GM10248 (cell line): ENCODE measurements at regions of chr20 and their contacts with region 1.

Region 1: GRCh38 chr20:38893565-38894090 is 32.6 kb upstream of the FAM83D start:
- DNase-seq: peak; percentile 89
- CTCF ChIP-seq: peak; percentile 99

Region 2: DNA sequence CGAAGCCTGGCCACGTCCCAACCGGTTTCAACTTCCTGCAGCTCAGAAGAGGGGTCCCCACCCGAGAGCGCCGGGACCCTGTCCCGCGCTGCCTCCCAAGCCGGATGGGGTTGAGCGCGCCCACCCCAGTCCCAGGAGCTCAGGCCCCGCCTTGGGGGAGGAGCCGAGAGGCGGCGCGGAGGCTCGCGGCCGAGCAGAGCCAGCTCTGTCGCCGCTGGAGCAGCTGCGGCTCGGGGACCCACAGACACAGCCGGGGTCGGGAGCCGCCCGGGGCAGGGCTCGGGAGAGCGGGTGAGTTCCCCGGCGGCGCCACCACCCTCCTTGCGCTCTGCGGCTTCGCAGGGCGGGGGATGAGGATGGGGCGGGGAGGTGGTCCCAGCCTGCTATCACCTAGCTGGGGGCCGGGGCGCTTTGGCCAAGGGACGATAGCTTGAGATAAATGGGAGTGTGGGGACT is 88.1 kb before region 1 on chr20 and contains the start of gene PPP1R16B:
- CTCF ChIA-PET with region 1: interaction called, 26 read pairs
- POLR2A ChIA-PET with region 1: interaction called, 6 read pairs
- DNase-seq: peak; percentile 87
- CTCF ChIP-seq: no peak

Region 3: GRCh38 chr20:38833857-38834164 is 59.8 kb before region 1 on chr20:
- CTCF ChIA-PET with region 1: interaction called, 10 read pairs
- POLR2A ChIA-PET with region 1: no interaction called
- DNase-seq: peak; percentile 36
- CTCF ChIP-seq: no peak

Region 4: DNA sequence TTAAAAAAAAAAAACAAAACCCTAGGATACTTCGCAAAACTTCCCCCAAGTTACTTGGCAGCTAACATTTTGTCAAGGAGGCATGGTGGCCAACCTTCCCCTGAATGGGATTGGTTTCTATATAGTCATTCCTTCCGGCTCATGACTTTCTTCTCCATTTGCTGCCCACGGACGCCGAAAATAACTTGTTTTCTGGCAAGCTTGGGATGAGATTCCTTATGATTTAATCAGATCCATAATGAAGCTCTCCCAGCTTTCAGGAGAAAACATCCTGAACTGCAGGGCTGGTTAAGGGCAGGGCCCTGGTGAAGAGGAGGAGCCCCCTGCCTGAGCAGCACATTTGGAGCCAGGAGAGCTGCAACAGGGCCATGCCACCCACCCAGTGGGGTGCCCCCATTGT is 38.3 kb before region 1 on chr20:
- CTCF ChIA-PET with region 1: interaction called, 66 read pairs
- POLR2A ChIA-PET with region 1: no interaction called
- DNase-seq: no peak
- CTCF ChIP-seq: no peak

Region 5: DNA sequence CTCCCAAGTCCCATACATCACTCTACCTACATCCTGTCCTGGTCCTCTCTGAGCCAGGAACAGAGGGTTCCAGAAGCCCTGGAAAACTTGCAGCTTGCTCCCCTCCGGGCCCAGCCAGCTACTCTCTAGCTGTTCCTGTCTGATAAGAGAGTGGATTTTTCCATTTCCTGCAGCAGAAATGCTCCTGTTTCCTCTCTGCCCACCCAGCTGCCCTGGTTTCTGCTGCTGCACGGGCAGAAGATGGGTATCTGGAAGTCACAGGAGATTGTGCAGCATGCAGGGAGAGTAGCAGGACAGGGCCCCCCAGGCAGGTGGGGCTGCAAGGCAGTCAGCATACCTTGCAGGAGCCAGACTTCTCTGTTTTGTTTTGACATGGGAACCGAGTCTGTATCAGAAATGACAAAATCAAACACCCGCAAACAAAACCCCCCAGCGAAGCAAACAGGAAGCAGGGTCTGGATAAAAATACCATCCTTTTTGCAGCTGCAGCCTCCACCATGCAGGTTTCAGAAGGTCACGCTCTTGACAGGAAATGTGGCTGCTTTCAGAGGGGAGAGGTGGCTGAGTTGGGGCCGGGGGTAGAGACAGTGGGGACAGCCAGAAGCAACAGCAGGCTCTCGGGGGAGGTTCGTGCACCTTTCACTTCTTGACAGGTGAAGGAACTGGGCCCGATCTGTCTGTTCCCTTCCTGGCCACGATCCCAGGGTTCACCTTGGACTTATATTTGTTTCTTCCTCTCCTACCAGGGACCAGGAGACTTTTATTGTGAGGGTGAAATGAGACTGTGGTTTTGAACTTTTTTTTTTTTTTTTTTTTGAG is 18.2 kb before region 1 on chr20:
- CTCF ChIA-PET with region 1: interaction called, 112 read pairs
- POLR2A ChIA-PET with region 1: interaction called, 6 read pairs
- DNase-seq: peak; percentile 83
- CTCF ChIP-seq: no peak

Region 6: GRCh38 chr20:38907918-38908677 is 14.5 kb after region 1 on chr20:
- CTCF ChIA-PET with region 1: interaction called, 19 read pairs
- POLR2A ChIA-PET with region 1: no interaction called
- DNase-seq: no peak
- CTCF ChIP-seq: no peak